B cell (primary cell): ENCODE measurements at regions of chr15 and their contacts with region 1.

Region 1: DNA sequence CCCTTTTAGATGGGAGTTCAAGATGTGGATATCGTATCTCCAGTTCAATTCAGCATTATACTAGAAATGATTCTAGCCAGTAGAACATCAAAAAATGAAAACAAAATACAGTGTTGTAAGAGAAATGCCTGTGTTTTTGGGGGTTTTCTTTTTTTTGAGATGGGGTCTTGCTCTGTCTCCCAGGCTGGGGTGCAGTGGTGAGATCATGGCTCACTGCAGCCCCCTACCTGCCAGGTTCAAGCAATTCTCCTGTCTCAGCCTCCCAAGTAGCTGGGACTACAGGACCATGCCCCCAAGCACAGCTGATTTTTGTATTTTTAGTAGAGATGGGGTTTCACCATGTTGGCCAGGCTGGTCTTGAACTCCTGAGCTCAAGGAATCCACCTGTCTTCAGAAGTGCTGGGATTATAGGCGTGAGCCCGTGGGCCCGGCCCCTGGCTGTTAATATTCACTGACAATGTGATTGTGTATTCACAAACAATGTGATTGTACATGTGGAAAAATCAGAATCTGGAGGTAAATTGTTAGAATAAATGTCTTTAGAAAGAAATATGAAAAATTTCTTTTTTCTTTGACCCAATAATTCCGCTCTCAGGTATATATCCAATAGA is 59.0 kb downstream of the ARIH1 start:
- DNase-seq: peak; percentile 55
- ATAC-seq: no peak
- H3K4me3 ChIP-seq: no peak overlapping the region
- H3K4me3 Mint-ChIP-seq: no peak overlapping the region
- H3K27ac ChIP-seq: no peak overlapping the region
- H3K27ac Mint-ChIP-seq: no peak overlapping the region
- H3K4me1 ChIP-seq: no peaks in the 10 kb centered on the region
- H3K4me1 Mint-ChIP-seq: peaks cover 11% of the 10 kb centered on the region
- H3K27me3 ChIP-seq: no peaks in the 10 kb centered on the region
- H3K27me3 Mint-ChIP-seq: no peaks in the 10 kb centered on the region
- CTCF ChIP-seq: peak; percentile 65

Region 2: DNA sequence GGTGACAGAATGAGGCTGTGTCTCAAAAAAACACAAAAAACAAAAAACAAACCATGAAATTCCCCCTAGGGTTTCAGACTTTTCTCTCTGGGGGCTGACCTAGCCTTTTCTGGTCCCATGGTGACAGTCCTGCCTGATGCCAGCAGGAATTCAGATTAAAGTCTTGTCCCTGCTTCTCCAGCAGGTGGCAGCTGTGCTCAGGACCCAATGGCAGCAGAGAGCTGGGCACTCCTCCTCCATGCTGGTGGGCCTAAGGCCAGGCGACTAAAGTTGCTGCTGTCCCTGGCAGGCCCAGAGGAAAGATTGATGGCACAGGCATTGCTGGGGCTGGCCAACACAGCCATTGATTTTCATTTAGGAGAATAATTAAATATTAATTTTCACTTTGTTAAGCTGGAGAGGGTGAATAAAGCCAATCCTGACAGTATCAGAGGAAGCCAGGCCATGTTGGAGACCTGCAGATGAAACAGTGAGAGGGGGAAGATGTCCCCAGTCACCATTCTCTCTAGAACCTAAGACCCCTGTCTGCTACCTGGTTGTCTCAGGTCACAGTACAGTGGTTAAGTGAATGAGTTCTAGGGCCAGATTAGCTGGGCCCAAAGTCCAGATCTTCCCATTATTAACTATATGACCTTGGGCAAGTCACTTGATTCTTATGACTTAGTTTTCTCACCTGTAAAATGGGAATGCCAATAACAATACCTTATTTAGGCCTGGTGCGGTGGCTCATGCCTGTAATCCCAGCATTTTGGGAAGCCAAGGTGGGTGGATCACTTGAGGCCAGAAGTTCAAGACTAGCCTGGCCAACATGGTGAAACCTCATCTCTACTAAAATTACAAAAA is 220.3 kb before region 1 on chr15:
- CTCF ChIA-PET with region 1: interaction called, 31 read pairs
- POLR2A ChIA-PET with region 1: no interaction called
- intact Hi-C with region 1: no loop called
- DNase-seq: peak; percentile 72
- ATAC-seq: peak; percentile 87
- H3K4me3 ChIP-seq: no peak overlapping the region
- H3K4me3 Mint-ChIP-seq: no peak overlapping the region
- H3K27ac ChIP-seq: no peak overlapping the region
- H3K27ac Mint-ChIP-seq: no peak overlapping the region
- H3K4me1 ChIP-seq: no peaks in the 10 kb centered on the region
- H3K4me1 Mint-ChIP-seq: no peaks in the 10 kb centered on the region
- H3K27me3 ChIP-seq: no peaks in the 10 kb centered on the region
- H3K27me3 Mint-ChIP-seq: no peaks in the 10 kb centered on the region
- CTCF ChIP-seq: peak; percentile 79

Region 3: GRCh38 chr15:72339777-72340177 is 193.3 kb before region 1 on chr15:
- CTCF ChIA-PET with region 1: interaction called, 3 read pairs
- POLR2A ChIA-PET with region 1: no interaction called
- intact Hi-C with region 1: loop called (anchors 1 kb)
- DNase-seq: no peak
- ATAC-seq: no peak
- H3K4me3 ChIP-seq: no peak overlapping the region
- H3K4me3 Mint-ChIP-seq: no peak overlapping the region
- H3K27ac ChIP-seq: no peak overlapping the region
- H3K27ac Mint-ChIP-seq: no peak overlapping the region
- H3K4me1 ChIP-seq: no peaks in the 10 kb centered on the region
- H3K4me1 Mint-ChIP-seq: no peaks in the 10 kb centered on the region
- H3K27me3 ChIP-seq: no peaks in the 10 kb centered on the region
- H3K27me3 Mint-ChIP-seq: no peaks in the 10 kb centered on the region
- CTCF ChIP-seq: no peak